ENCODE measurements at regions of chrX and their contacts with region 1.

Region 1: GRCh38 chrX:154308108-154308946 is 12.7 kb downstream of the TKTL1 start:
- DNase-seq: peak; percentile 85
- ATAC-seq: peak; percentile 75
- H3K4me3 Mint-ChIP-seq: no peak overlapping the region
- H3K27ac Mint-ChIP-seq: peak overlapping the region; percentile 87
- H3K4me1 Mint-ChIP-seq: peaks cover 42% of the 10 kb centered on the region
- H3K27me3 Mint-ChIP-seq: no peaks in the 10 kb centered on the region

Region 2: DNA sequence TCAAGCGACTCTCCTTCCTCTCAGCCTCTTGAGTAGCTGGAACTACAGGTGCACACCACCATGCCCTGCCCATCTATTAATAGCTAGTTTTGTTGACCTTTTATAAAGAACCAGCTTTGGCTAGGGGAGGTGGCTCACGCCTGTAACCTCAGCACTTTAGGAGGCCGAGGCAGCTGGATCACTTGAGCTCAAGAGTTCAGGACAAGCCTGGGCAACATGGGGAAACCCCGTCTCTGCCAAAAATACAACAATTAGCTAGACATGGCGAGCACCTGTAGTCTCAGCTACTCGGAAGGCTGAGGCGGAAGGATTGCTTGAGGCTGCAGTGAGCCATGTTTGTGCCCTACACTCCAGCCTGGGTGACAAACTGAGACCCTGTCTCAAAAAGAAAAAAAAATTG is 10.0 kb before region 1 on chrX:
- CTCF ChIA-PET with region 1: interaction called, 13 read pairs
- POLR2A ChIA-PET with region 1: no interaction called
- DNase-seq: no peak
- ATAC-seq: no peak
- H3K4me3 Mint-ChIP-seq: no peak overlapping the region
- H3K27ac Mint-ChIP-seq: no peak overlapping the region
- H3K4me1 Mint-ChIP-seq: no peaks in the 10 kb centered on the region
- H3K27me3 Mint-ChIP-seq: no peaks in the 10 kb centered on the region

Region 3: DNA sequence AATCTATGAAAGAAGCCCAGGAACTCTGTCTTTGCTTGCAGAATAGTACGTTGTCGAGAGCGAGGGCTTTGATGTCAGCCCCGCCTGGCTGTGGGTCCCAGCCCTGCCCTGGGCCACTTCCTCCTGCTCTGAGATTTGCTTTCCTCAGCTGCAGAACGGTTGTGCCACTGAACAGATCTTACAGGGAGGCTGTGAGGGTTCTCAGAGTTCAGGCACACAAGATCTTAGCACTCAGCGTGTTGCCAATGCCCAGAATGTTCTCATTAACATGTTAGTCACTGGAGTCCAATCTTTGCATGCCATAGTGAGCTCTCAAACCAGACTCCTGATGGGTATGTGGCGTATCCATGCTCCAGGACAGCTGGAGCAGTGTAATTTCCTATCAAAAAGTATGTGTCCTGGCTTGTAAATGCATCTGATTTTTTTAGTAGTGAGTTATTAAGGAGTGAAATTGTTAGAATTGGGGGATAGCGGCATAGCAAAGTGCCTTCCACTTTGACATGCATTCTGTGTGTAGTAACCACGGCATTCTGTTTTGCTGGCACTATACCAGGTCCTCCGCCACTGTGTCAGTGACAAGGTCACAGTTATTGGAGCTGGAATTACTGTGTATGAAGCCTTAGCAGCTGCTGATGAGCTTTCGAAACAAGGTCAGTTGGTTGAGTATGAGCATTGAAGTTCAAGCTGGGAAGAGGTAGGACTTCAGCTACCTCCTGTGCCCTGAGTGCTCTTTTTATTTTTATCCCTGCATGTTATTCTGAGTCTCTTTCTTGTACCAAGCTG is 18.9 kb after region 1 on chrX:
- CTCF ChIA-PET with region 1: interaction called, 25 read pairs
- POLR2A ChIA-PET with region 1: no interaction called
- DNase-seq: peak; percentile 69
- ATAC-seq: peak; percentile 97
- H3K4me3 Mint-ChIP-seq: peak overlapping the region; percentile 62
- H3K27ac Mint-ChIP-seq: peak overlapping the region; percentile 67
- H3K4me1 Mint-ChIP-seq: peaks cover 32% of the 10 kb centered on the region
- H3K27me3 Mint-ChIP-seq: no peaks in the 10 kb centered on the region

Region 4: DNA sequence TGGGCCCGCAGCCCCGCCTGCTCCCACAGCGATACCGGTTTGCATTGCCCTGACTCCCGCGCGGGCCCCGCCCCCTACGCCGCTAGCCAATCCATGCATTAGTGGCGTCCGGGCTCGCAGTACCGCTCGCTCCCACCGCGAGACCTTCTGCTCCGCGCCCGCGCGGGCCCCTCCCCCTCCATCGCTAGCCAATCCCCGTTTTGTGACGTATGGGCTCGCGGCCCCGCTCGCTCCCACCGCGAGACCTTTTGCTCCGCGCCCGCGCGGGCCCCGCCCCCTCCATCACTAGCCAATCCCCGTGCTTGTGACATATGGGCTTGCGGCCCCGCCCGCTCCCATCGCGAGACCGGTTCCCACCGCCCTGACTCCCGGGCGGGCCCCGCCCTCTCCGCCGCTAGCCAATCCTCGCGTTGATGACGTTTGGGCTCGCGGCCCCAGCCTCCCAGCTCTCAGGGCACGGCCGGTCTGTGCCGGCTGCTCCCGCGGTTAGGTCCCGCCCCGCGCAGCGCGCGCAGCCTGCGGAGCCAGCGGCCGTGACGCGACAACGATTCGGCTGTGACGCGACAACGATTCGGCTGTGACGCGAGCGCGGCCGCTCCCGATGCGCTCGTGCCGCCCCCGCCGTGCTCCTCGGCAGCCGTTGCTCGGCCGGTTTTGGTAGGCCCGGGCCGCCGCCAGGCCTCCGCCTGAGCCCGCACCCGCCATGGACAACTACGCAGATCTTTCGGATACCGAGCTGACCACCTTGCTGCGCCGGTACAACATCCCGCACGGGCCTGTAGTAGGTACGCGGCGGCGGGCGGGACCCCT is 70.7 kb after region 1 on chrX and contains the start of gene EMD:
- CTCF ChIA-PET with region 1: no interaction called
- POLR2A ChIA-PET with region 1: no interaction called
- DNase-seq: peak; percentile 97
- ATAC-seq: peak; percentile 88
- H3K4me3 Mint-ChIP-seq: peak within 1 kb of the TSS; percentile 84
- H3K27ac Mint-ChIP-seq: peak within 1 kb of the TSS; percentile 92
- H3K4me1 Mint-ChIP-seq: peaks cover 31% of the 10 kb centered on the region
- H3K27me3 Mint-ChIP-seq: no peaks in the 10 kb centered on the region
- total RNA-seq, gene EMD: 65.9 to 66.0 TPM